Naive thymus-derived CD4-positive, alpha-beta T cell (primary cell): ENCODE measurements at regions of chrX and their contacts with region 1.

Region 1: DNA sequence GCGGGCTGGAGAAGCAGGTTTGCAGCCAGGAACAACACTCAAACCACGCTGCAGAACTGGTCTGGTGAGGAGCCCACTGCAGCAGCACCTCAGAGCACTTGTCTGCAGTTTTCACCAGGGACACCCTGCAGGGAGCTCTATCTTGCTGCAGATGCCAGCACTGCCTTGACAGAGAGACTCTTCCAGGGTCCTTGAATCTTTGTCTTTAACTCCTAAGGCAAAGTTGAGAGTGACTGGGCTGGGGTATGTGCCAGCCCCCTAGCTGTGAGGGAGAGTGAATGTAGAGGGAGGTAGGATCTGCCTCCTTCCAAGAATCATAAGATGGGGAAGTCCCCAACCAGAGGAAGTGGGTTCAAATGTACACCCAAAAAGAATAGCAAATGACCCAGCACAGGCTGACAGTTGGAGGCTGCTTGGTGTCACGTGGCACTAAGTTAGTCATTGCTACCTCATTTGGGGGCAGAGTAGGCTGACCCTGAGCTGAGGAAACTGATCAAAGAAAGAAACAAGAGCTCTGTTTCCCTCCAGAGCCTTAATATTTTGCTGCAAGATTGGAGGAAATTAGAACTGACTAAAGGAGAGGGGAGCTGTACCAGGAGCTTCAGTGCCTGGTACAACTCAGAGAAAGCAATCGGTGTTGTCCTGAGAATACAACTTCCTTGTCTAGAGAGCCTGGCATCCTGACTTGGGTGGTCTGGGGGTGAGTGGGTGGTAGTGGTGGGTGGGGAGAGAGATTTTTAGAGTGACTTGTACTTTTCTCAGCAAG is 28.2 kb upstream of the HUWE1 start:
- DNase-seq: peak; percentile 7 to 59 (median 41)
- ATAC-seq: peak; percentile 84
- H3K4me3 ChIP-seq: peak overlapping the region; percentile 39
- H3K4me3 Mint-ChIP-seq: peak overlapping the region; percentile 61 to 92 (median 78)
- H3K27ac ChIP-seq: peak overlapping the region; percentile 78
- H3K27ac Mint-ChIP-seq: peak overlapping the region; percentile 84 to 98 (median 89)
- H3K4me1 ChIP-seq: peaks cover 30 to 42% of the 10 kb centered on the region in 2 donors
- H3K4me1 Mint-ChIP-seq: peaks cover 25 to 53% (median 51%) of the 10 kb centered on the region in 7 donors
- H3K27me3 ChIP-seq: no peaks in the 10 kb centered on the region
- H3K27me3 Mint-ChIP-seq: no peaks in the 10 kb centered on the region

Region 2: GRCh38 chrX:53732797-53733196 is 18.0 kb after region 1 on chrX:
- CTCF ChIA-PET with region 1: interaction called, 6 read pairs
- POLR2A ChIA-PET with region 1: interaction called, 3 read pairs
- intact Hi-C with region 1: loop called (anchors 2 kb)
- DNase-seq: no peak
- ATAC-seq: no peak
- H3K4me3 ChIP-seq: no peak overlapping the region
- H3K4me3 Mint-ChIP-seq: peak overlapping the region in 1 of 10 donors; percentile 65
- H3K27ac ChIP-seq: no peak overlapping the region
- H3K27ac Mint-ChIP-seq: peak overlapping the region in 1 of 9 donors; percentile 88
- H3K4me1 ChIP-seq: peaks cover 0 to 4% of the 10 kb centered on the region in 2 donors
- H3K4me1 Mint-ChIP-seq: peaks cover 0 to 32% (median 21%) of the 10 kb centered on the region in 7 donors
- H3K27me3 ChIP-seq: no peaks in the 10 kb centered on the region
- H3K27me3 Mint-ChIP-seq: no peaks in the 10 kb centered on the region

Region 3: DNA sequence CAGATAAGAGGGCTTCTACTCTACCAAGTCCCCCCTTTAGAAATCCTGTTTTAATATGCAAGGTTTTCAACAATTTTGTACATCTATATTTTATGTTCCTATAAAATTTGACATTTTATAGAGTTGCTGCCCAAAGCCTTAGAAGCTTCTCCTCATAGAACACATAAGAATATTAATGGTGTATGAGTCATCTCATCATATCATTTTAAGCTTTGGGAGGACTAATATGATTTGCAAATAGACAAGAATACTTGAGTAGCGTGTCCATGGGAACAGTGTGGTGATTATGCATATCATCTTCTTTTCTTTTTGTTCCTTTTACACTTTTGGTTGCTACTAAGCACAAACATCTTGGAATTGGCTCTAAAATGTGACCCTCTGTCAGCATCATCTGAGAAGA is 28.5 kb after region 1 on chrX:
- CTCF ChIA-PET with region 1: no interaction called
- POLR2A ChIA-PET with region 1: no interaction called
- intact Hi-C with region 1: loop called in 1 of 2 experiments (anchors 1 kb)
- DNase-seq: no peak
- ATAC-seq: no peak
- H3K4me3 ChIP-seq: no peak overlapping the region
- H3K4me3 Mint-ChIP-seq: no peak overlapping the region
- H3K27ac ChIP-seq: no peak overlapping the region
- H3K27ac Mint-ChIP-seq: no peak overlapping the region
- H3K4me1 ChIP-seq: no peaks in the 10 kb centered on the region
- H3K4me1 Mint-ChIP-seq: peaks cover 0 to 9% (median 0%) of the 10 kb centered on the region in 7 donors
- H3K27me3 ChIP-seq: no peaks in the 10 kb centered on the region
- H3K27me3 Mint-ChIP-seq: no peaks in the 10 kb centered on the region

Region 4: DNA sequence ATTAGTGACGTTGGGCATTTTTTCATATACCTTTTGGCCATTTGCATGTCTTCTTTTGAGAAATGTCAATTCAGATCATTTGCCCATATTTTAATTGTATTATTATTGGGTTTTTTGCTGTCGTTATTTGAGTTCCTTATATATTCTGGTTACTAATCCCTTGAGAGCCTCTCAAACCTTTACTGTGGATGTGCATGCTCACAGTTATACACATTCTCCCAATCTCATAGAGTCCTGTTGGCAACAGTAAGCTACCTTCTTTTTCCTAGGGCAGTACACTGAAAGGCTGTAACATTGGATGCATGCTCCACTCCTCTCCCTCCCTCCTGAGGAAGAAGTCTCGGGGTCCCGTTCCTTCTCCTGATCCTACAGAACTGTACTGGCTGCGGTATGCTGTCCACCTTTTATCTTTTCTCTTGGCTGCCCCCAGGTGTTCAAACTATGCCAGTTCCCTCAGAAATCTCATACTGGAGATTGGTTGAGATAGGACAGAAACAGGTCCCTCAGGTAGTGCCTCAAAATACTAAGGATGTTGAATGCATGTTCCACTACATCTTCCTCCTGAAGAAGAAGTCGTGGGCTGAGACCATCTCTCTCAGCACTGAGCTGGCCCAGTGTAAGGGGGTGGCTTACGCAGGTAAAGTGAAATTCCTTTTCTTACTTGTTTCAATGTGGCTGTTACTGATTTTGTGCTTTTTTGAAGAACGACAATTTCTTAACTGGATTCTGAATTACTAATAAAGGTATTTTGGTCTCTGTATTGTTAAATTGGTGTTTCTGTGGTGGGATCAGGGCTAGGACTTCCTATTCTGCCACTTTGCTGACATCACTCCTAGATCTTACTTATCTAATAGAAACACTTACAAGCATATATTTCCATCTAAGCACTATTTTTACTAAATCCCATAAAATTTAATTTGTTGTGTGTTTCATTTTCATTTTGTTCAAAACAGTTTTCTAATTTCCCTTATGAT is 117.2 kb after region 1 on chrX:
- CTCF ChIA-PET with region 1: no interaction called
- POLR2A ChIA-PET with region 1: no interaction called
- intact Hi-C with region 1: loop called in 1 of 2 experiments (anchors 1 kb)
- DNase-seq: peak in 8 of 9 donors; percentile 12 to 45 (median 32)
- ATAC-seq: peak; percentile 71
- H3K4me3 ChIP-seq: no peak overlapping the region
- H3K4me3 Mint-ChIP-seq: peak overlapping the region in 1 of 10 donors; percentile 56
- H3K27ac ChIP-seq: no peak overlapping the region
- H3K27ac Mint-ChIP-seq: no peak overlapping the region
- H3K4me1 ChIP-seq: no peaks in the 10 kb centered on the region
- H3K4me1 Mint-ChIP-seq: peaks cover 0 to 16% (median 4%) of the 10 kb centered on the region in 7 donors
- H3K27me3 ChIP-seq: no peaks in the 10 kb centered on the region
- H3K27me3 Mint-ChIP-seq: no peaks in the 10 kb centered on the region